Calu3 (cell line): ENCODE measurements at regions of chr21 and their contacts with region 1.

Region 1: GRCh38 chr21:29181799-29182470 is 51.5 kb downstream of the MAP3K7CL start:
- DNase-seq: no peak
- H3K4me3 Mint-ChIP-seq: peak overlapping the region; percentile 46
- H3K27ac Mint-ChIP-seq: peak overlapping the region; percentile 85
- H3K4me1 Mint-ChIP-seq: peaks cover 43% of the 10 kb centered on the region
- H3K27me3 Mint-ChIP-seq: no peaks in the 10 kb centered on the region
- CTCF ChIP-seq: no peak

Region 2: DNA sequence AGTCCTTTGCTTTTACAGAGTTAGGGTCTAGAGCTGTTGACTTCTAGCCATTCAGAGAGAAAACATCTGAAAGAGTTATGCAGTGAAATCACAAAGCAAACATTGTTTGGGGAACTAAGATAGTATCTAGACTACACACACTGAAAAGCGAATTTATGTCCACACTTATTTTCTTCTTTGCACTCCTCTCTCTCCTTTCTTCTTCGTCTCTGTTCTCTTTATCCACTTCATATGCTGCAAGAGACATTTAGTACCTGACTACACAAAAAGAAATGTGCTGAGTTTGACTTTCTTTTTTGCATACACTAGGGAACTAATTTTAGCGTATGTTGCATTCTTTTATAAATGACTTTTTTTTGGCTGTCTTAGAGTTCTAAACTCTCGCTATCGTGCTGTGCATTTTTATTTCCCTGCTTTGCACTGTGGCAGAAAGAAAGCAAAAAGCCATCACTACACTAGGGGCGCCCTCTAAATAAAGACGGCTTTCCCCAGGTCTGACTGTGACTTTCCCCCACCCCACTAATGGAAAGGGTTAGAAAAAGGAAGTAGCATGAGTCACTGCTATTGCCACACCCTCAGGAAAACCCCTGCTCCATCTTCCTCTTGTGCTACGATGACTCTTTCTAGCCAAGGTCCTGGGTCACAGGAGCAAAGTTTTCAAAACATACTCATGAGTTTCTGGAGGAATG is 14.2 kb after region 1 on chr21:
- CTCF ChIA-PET with region 1: interaction called, 5 read pairs
- intact Hi-C with region 1: loop called (anchors 1 kb)
- DNase-seq: peak; percentile 76
- H3K4me3 Mint-ChIP-seq: peak overlapping the region; percentile 61
- H3K27ac Mint-ChIP-seq: peak overlapping the region; percentile 98
- H3K4me1 Mint-ChIP-seq: peaks cover 34% of the 10 kb centered on the region
- H3K27me3 Mint-ChIP-seq: no peaks in the 10 kb centered on the region
- CTCF ChIP-seq: peak; percentile 31